GM10248 (cell line): ENCODE measurements at regions of chr1 and their contacts with region 1.

Region 1: DNA sequence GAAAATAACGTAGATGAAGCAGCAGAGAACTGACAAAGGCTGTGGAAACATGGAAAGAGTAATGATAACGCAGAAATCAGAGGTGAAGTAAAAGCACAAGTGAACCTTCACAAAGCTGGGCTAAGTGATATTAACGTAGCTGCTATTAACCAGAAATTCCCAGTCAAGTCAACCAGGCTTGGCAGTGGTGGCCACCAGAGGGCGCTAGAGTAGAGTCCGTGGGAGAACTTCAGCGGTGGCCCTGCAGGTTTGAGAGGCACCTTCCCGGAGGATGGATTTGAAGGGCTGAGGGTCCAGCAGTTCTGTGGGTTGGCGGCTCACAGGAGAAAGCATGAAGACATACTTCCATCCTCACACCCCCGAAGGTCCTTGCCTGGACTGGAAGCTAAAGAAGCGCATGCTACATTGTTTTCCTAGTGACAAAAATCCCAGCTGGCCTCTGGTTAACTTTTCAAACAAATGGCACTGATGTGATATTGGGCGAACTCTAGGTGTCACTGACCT is 81.7 kb upstream of the ZNF648 start:
- DNase-seq: peak; percentile 74
- CTCF ChIP-seq: peak; percentile 95

Region 2: GRCh38 chr1:182129398-182129797 is 13.8 kb before region 1 on chr1:
- CTCF ChIA-PET with region 1: interaction called, 78 read pairs
- POLR2A ChIA-PET with region 1: no interaction called
- DNase-seq: no peak
- CTCF ChIP-seq: no peak

Region 3: GRCh38 chr1:182170891-182171461 is 27.8 kb after region 1 on chr1:
- CTCF ChIA-PET with region 1: interaction called, 18 read pairs
- POLR2A ChIA-PET with region 1: no interaction called
- DNase-seq: peak; percentile 39
- CTCF ChIP-seq: no peak

Region 4: DNA sequence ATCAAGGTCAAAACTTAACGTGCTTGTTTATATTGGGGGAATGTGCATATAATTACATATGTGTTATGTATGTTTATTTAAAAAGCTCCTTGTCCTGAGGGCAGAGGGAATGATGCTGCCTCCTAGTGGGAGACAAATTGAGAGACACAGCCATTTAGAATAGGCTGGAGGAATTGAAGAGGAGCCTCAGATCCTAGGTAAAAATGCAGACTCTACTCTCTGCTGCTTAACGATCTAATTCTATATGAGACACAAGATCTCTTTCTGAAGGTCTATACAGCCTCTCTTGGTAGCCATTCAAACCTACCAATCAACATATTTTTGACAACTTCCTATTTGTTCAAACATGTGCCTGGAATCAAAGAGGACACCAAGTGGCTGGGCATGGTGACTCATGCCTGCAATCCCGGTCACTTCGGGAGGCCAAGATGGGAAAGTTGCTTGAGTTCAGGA is 54.9 kb after region 1 on chr1:
- CTCF ChIA-PET with region 1: interaction called, 102 read pairs
- POLR2A ChIA-PET with region 1: no interaction called
- DNase-seq: peak; percentile 17
- CTCF ChIP-seq: peak; percentile 34

Region 5: GRCh38 chr1:182391362-182392044 is 248.3 kb after region 1 on chr1 and contains the start of gene GLUL:
- CTCF ChIA-PET with region 1: interaction called, 245 read pairs
- POLR2A ChIA-PET with region 1: interaction called, 6 read pairs
- DNase-seq: peak; percentile 91
- CTCF ChIP-seq: no peak

Region 6: DNA sequence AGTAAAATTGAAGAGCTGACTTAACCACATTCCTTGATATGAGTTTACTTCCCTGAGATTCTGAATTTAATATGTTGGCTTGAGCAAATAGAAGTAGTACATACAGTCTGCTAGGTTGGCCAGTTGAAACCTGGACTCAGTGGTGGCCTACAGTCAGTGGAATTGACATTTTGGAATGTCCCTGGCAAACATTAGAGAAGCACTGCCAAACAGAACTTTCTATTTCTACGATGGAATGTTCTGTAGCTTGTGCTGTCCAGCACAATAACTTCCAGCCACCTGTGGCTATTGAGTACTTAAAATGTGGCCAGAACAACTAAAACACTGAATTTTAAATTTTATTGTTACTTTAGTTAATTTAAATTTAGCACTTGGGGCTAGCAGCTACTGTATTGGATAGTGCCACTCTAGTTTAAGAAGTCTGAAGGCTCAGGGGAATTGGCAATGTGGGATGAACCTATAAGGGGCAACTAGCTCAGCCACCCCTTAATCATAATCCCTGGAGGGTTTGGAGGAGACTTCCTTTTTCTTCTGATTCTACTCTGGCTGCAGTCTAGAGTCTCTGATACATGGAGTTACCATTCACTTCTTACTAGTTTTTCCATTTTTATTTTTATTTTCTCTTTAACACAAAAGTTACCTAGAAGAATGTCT is 267.5 kb after region 1 on chr1:
- CTCF ChIA-PET with region 1: interaction called, 11 read pairs
- POLR2A ChIA-PET with region 1: no interaction called
- DNase-seq: no peak
- CTCF ChIP-seq: no peak